ENCODE measurements at regions of chr12 and their contacts with region 1.

Region 1: GRCh38 chr12:108803428-108804105 is 53.8 kb downstream of the SSH1 start:
- DNase-seq: peak; percentile 88
- CTCF ChIP-seq: peak; percentile 79

Region 2: GRCh38 chr12:108618079-108618952 is 185.3 kb before region 1 on chr12:
- CTCF ChIA-PET with region 1: interaction called, 56 read pairs
- POLR2A ChIA-PET with region 1: no interaction called
- DNase-seq: peak; percentile 82
- CTCF ChIP-seq: peak; percentile 93

Region 3: GRCh38 chr12:108649669-108650068 is 153.9 kb before region 1 on chr12:
- CTCF ChIA-PET with region 1: interaction called, 15 read pairs
- POLR2A ChIA-PET with region 1: no interaction called
- DNase-seq: no peak
- CTCF ChIP-seq: no peak

Region 4: DNA sequence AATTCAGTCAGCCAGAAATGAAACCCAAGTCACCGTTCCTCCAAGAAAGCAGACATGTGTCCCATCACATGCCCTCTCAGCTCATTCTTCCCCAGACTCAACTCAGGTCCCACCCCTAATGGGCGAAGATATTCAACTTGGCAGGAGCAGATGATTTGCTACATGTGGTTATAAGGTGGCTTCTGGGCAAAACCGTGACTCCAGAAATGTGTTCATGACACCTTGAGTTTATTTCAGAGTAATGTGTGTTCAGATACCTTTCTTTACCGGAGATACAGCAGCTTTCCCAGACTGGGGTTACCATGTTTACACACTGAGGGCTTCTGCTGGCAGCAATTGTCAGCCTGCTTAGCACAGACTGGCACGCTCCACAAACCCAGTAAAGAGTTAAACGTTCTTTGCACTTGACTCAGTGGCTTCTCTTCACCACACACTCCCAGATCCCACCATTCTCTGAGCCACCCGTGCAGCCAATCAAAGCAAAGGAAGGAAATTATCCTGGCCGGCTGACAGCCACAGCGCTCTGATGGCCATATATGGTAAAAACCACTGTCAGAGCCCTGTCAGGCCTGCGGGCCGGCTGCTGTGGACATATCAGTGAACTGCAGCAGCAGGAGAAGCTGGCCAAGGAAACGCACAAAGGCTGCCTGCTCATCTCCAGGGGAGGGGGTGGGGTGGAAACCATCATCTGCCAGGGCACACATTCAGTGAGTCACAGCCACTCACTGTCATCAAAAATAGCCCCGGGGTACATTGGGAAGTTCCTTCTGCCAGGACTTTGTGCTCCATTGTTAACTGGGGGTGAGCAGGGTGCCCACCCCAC is 112.2 kb before region 1 on chr12:
- CTCF ChIA-PET with region 1: interaction called, 13 read pairs
- POLR2A ChIA-PET with region 1: interaction called, 3 read pairs
- DNase-seq: peak; percentile 57
- CTCF ChIP-seq: peak; percentile 11

Region 5: DNA sequence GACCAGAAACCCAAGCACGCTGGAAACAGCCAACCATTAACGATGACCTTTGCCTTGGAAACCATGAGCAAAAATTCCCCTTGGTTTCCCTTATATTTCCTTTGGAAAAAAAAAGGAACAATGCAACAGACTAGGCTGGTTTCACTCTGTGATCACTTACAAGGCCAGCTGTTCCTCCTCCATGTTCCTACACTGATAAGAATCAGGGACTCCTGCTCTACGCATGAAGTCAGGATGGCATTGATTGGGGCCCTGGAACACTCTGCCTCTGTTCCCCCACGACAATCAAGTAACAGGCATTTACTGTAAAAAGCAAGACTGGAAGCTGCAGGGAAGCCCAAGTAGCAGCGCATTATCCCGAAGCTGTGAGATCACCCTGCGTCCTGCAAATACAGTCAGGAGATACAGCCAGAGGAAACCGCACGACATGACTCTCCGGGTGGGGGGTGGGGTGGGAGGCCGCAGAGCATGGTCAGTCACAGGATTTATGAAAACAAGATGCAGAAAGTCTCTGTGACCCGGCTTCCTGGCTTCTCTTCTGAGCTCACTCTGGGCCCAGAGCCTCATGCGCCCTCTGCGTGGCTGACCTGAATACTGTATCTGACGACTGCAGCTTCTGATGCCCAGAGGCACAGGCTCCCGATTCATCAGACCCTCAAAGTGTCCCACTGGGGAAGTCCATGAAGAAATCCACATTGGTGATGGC is 22.7 kb after region 1 on chr12:
- CTCF ChIA-PET with region 1: interaction called, 31 read pairs
- POLR2A ChIA-PET with region 1: no interaction called
- DNase-seq: peak; percentile 49
- CTCF ChIP-seq: no peak

Measured in GM10248 (cell line).